Esophagus muscularis mucosa (tissue), 4 donors: ENCODE measurements at regions of chr9 and their contacts with region 1.

Region 1: DNA sequence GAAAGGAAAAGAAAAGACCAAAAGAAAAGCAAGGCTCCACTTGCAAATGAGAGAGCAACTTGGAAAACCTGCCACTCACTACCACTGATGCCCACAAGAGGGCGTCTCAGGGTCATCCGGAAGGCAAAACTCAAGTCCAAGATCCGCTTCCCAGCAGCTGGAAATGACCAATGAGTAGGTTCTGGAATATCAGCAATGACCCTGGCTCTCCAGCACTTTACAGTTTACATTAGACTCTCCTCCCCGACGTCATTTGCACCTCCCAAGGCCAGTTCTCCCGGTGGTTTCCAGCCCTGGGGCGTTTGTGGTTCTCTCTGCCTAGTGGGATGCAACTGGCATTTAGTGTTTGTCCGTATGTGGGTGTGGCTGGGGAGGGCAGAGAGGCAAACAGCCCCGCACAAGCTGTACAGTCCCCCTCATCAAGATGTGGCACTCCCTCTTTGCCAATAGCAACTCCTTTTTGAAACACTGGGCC is 193.8 kb upstream of the ZNF618 start:
- DNase-seq: peak; percentile 94
- H3K4me3 ChIP-seq: peak overlapping the region in 1 of 4 donors; percentile 15
- H3K27ac ChIP-seq: no peak overlapping the region
- H3K4me1 ChIP-seq: peaks cover 0 to 8% (median under 1%) of the 10 kb centered on the region in 4 donors
- H3K27me3 ChIP-seq: peaks cover 0 to 14% (median 0%) of the 10 kb centered on the region in 4 donors
- CTCF ChIP-seq: peak in 2 of 3 experiments; percentile 74 to 84
- EP300 ChIP-seq: no peak
- POLR2A ChIP-seq: no peak

Region 2: DNA sequence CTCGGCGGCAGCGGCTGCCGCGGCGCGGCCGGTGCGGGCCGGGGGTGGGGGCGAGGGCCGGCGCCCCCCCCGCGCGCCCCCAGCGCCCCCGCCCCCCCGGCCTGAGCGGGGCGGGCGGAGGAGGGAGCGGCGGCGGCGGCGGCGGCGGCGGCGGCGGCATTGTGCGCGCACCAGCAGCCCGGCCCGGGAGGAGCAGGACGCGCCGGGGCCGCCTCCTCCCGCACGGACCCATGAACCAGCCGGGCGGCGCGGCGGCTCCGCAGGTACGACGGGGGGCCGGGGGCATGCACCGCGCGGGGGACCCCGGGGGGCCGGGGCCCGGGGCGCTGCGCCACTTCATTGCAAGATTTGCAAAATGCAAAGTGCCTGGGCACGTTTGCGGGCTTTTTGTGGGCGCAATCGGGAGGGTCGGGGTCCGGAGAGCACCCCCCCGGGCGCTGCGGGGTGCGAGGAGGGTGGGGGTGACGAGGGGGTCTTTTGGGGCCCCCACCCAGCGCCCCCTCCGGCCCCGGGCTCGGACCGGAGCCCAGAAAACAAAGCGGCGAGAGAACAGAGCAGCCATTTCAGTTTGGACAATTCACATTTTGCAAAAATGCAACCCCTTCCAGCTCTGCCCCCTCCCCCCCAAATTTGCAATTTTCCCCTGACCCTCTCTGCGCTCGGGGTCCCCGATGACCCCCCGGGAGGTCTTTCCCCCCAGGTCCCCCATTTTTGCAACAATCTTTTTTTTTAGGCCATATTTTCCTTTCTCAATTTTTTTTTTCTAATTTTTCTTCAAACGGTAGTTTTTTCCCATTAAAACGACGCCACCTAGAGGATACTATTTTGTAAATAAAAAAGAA is 194.0 kb after region 1 on chr9 and contains the start of gene ZNF618:
- intact Hi-C with region 1: loop called (anchors 10 kb)
- DNase-seq: no peak
- H3K4me3 ChIP-seq: peak within 1 kb of the TSS; percentile 83 to 96 (median 90)
- H3K27ac ChIP-seq: peak within 1 kb of the TSS; percentile 65 to 78 (median 68)
- H3K4me1 ChIP-seq: peaks cover 4 to 18% (median 11%) of the 10 kb centered on the region in 4 donors
- H3K27me3 ChIP-seq: no peaks in the 10 kb centered on the region
- CTCF ChIP-seq: peak; percentile 26 to 50 (median 49)
- EP300 ChIP-seq: no peak
- POLR2A ChIP-seq: no peak
- total RNA-seq, gene ZNF618: 1.2 to 4.5 (median 2.6) TPM

Region 3: GRCh38 chr9:113906411-113907110 is 224.2 kb after region 1 on chr9:
- intact Hi-C with region 1: no loop called
- DNase-seq: no peak
- H3K4me3 ChIP-seq: no peak overlapping the region
- H3K27ac ChIP-seq: no peak overlapping the region
- H3K4me1 ChIP-seq: peaks cover 0 to 8% (median 2%) of the 10 kb centered on the region in 4 donors
- H3K27me3 ChIP-seq: no peaks in the 10 kb centered on the region
- CTCF ChIP-seq: no peak
- EP300 ChIP-seq: no peak
- POLR2A ChIP-seq: no peak

Region 4: GRCh38 chr9:113998525-113999255 is 316.4 kb after region 1 on chr9:
- intact Hi-C with region 1: no loop called
- DNase-seq: peak; percentile 72
- H3K4me3 ChIP-seq: no peak overlapping the region
- H3K27ac ChIP-seq: no peak overlapping the region
- H3K4me1 ChIP-seq: peaks cover 11 to 15% (median 12%) of the 10 kb centered on the region in 4 donors
- H3K27me3 ChIP-seq: no peaks in the 10 kb centered on the region
- CTCF ChIP-seq: no peak
- EP300 ChIP-seq: no peak
- POLR2A ChIP-seq: no peak